Cardiac septum (tissue), 1 donor: ENCODE measurements at regions of chr9 and their contacts with region 1.

Region 1: GRCh38 chr9:86795823-86796553 is 151.3 kb downstream of the GAS1 start:
- DNase-seq: no peak

Region 2: GRCh38 chr9:86741311-86742208 is 54.4 kb before region 1 on chr9:
- intact Hi-C with region 1: loop called (anchors 10 kb)
- DNase-seq: no peak

Region 3: DNA sequence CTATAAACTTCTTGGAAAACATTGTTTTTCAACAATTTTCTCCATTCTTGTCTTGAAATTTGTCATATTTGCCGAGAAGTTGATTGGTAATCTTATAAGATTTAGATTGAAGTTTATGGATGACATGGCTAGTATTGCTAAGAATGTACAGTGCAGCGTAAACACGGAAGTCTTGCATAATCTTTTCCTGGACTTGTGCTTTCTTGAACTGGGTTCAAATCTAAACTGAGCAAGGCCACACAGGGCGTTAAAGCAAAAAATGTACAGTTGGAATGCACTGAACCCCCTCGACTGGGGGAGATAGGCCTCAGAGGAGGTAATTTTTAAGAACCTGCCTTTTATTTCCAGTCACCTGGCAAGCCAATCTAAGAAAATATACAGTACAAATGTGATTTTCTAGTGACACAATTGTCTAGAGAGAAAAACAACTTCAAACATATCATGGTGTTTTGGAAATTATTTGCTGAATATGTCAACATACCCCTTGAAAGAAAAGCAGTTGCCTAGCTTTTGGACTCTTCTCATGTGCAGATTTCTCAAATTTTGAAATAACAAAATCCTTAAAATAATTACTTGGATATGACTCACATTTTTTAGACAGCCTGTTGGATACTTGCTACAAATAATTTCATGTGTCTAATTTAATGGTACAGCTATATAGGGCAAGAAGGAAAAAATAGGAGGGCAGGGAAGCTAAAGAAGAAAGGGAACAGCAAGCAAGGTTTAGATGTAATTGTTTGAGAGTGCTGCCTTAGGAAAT is 169.8 kb after region 1 on chr9:
- intact Hi-C with region 1: no loop called
- DNase-seq: no peak